Activated CD8-positive, alpha-beta memory T cell treated with anti-CD3 and anti-CD28 coated beads, Interleukin-2, amount 10 ng/mL, durations not matched to agents 7 days and 5 days (primary cell): ENCODE measurements at regions of chr15 and their contacts with region 1.

Region 1: DNA sequence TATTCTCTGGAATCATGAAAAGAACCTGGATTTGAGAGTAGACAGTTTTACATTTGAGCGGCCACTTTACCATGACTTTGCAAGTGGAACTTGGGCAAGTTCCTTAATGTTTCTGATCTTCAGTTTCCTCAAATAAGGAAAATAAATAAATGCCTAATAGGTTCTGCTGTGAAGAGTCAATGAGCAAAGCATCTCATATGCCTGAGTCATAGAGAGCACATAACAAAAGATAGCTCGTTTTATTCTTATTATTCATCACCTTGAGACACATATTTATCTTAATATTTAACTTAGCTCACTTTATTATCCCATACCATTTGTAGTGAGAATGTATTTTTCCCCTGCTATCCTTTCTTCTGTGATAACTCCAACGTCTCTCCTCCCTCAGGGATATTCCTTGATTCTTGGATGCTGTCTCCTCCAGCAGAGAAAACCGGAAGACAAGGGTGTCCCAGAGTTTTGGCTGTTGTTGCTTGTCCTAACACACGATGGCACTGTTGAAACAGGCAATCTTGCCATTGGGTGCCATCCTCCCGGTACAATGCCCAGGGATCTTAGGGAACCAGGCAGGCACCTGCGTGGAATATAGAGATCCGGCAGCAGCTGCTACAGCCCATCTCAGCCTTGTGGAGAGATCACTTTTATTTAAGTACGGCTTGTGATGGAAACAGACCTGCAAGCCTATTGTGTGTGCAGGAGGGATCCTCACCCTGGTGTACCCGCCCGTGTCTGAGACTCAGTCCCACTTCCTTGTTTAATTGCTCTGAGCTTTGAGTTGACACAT is 33.3 kb upstream of the VPS33B start:
- DNase-seq: peak; percentile 48
- ATAC-seq: peak; percentile 36
- H3K4me3 Mint-ChIP-seq: no peak overlapping the region
- H3K27ac Mint-ChIP-seq: no peak overlapping the region
- H3K4me1 Mint-ChIP-seq: no peaks in the 10 kb centered on the region
- H3K27me3 Mint-ChIP-seq: peaks cover 76% of the 10 kb centered on the region

Region 2: DNA sequence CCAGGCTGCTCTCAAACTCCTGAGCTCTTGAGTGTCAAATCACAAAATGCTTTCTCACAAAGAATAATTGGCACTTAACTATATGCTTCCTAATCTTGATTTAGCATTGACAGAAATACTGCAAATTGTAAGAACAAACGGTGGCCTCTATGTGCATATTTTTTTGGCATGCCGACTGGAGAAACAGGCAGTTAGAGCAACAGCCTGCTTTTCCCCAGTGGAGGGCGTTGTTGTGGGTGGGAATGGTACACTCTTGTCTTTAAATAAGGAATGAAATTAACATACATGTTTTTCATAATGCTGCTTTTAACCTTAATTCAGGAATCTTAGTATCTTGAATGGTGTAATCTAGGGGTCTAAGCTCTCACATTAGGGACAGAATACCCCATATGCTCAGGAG is 13.2 kb after region 1 on chr15:
- CTCF ChIA-PET with region 1: interaction called, 10 read pairs
- DNase-seq: no peak
- ATAC-seq: no peak
- H3K4me3 Mint-ChIP-seq: no peak overlapping the region
- H3K27ac Mint-ChIP-seq: no peak overlapping the region
- H3K4me1 Mint-ChIP-seq: no peaks in the 10 kb centered on the region
- H3K27me3 Mint-ChIP-seq: peaks cover 45% of the 10 kb centered on the region